Right ventricle myocardium inferior (tissue), 1 donor: ENCODE measurements at regions of chr2 and their contacts with region 1.

Region 1: GRCh38 chr2:71068218-71069035 is at the start of gene NAGK:
- DNase-seq: peak; percentile 99
- ATAC-seq: peak; percentile 95
- total RNA-seq, gene NAGK: 56.0 TPM

Region 2: GRCh38 chr2:70994756-70995729 is 73.4 kb before region 1 on chr2 and contains the start of gene TEX261:
- intact Hi-C with region 1: loop called (anchors 2 kb)
- DNase-seq: peak; percentile 95
- ATAC-seq: peak; percentile 99
- total RNA-seq, gene TEX261: 63.8 TPM

Region 3: DNA sequence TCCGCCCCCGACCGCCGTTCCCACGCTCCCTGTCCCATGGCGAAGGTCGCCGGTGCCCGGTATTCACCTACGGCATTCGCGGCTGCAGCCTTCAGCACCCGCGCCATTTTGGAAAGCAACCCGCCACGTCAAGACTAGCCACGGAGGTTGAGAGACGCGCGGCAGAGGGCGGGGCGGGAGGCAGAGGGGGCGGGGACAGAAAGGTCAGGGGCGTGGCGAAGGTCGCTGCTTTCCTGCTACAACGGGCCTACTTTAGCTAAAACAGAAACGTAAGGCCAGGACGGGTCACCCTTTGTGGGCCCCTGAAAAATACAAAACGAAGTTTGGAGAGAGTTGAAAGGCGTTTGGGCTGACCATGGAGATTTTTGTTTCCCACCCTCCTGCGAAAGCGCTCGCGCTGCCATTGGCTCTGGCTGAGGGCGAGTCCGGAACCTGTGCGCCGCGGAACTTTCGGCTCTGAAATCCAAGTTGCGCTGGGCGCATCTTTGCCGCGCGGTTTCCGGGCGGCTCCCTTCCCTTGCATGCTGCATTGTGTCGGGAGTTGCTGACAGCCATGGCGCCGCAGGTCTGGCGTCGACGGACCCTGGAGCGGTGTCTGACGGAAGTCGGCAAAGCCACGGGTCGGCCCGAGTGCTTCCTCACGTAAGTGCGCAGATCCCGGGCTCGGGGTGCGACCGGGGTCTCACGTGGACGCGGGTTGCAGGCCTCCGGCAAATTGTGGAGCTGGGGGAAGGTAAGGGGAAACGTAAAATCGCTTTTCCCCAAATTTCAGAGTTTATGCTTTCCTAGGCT is 61.9 kb after region 1 on chr2 and contains the starts of genes MCEE and MPHOSPH10:
- intact Hi-C with region 1: loop called (anchors 2 kb)
- DNase-seq: peak; percentile 96
- ATAC-seq: peak; percentile 97
- total RNA-seq, gene MCEE: 42.2 TPM
- total RNA-seq, gene MPHOSPH10: 21.0 TPM